Left cardiac atrium (tissue), 4 donors: ENCODE measurements at regions of chr17 and their contacts with region 1.

Region 1: DNA sequence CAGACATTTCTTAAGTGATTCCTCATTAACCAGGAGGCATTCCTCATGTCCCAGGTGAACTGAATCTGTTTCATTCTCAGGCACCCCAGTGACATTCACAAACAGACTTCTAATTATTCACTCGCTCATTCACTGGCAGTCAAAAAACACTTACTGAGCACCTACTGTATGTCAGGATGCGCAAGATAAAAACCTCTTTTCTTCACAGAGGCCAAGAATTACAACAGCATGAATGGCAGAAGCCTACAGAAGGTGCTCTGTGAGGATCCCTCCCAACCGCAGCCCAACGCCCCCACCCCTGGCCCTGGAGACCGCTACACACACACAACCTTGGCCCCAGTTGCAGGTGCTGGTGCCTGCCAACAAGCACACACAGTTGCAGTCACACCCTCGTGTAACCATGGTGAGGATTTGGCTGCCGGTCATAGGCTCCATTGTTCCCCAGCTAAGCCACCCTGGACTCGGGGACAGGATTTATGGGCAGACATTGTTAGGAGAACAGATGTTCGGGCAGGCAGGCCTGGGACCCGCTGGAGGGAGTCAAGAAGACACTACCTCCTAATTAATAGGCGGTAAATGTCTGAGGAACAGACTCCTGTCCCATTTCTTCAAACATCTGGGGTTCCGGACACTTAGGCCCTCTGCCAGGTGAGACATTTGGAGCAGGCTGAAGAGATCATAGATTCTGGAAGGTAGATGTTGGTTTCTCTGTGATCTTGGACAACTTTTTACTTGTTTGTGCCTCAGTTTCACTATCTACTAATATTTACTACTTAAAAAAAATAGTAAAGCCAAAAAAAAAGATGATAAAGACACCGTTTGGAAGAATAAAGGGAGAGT is 43.2 kb downstream of the CUEDC1 start:
- DNase-seq: peak; percentile 96
- ATAC-seq: peak; percentile 82 to 89

Region 2: GRCh38 chr17:57954395-57955182 is 42.5 kb after region 1 on chr17:
- intact Hi-C with region 1: loop called in 1 of 2 experiments (anchors 5 kb)
- DNase-seq: peak; percentile 89
- ATAC-seq: peak; percentile 78 to 84

Region 3: GRCh38 chr17:58112970-58113631 is 201.0 kb after region 1 on chr17:
- intact Hi-C with region 1: no loop called
- DNase-seq: peak; percentile 79
- ATAC-seq: peak; percentile 78 to 87